Mammary epithelial cell (primary cell): ENCODE measurements at regions of chr17 and their contacts with region 1.

Region 1: GRCh38 chr17:66743511-66743910 is 91.4 kb upstream of the CACNG5 start:
- DNase-seq: no peak
- H3K4me3 ChIP-seq: no peak overlapping the region
- H3K27ac ChIP-seq: no peak overlapping the region
- H3K4me1 ChIP-seq: no peaks in the 10 kb centered on the region
- H3K27me3 ChIP-seq: no peaks in the 10 kb centered on the region
- CTCF ChIP-seq: no peak

Region 2: DNA sequence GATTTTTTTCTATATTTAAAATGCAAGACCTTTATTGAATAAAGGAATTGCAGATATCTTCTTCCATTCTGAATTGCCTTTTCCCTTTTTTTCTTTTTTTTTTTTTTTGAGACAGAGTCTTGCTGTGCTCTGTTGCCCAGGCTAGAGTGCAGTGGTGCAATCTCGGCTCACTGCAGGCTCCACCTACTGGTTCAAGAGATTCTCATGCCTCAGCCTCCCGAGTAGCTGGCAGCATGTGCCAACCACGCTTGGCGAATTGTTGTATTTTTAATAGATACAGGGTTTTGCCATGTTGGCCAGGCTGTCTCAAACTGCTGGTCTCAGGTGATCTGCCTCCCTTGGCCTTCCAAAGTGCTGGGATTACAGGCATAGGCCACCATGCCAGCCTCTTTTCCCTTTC is 703.1 kb before region 1 on chr17:
- CTCF ChIA-PET with region 1: no interaction called
- dilution Hi-C with region 1: no loop called
- in situ Hi-C with region 1: no loop called
- intact Hi-C with region 1: no loop called
- DNase-seq: no peak
- H3K4me3 ChIP-seq: no peak overlapping the region
- H3K27ac ChIP-seq: no peak overlapping the region
- H3K4me1 ChIP-seq: no peaks in the 10 kb centered on the region
- H3K27me3 ChIP-seq: no peaks in the 10 kb centered on the region
- CTCF ChIP-seq: peak in 1 of 2 donors; percentile 5

Region 3: DNA sequence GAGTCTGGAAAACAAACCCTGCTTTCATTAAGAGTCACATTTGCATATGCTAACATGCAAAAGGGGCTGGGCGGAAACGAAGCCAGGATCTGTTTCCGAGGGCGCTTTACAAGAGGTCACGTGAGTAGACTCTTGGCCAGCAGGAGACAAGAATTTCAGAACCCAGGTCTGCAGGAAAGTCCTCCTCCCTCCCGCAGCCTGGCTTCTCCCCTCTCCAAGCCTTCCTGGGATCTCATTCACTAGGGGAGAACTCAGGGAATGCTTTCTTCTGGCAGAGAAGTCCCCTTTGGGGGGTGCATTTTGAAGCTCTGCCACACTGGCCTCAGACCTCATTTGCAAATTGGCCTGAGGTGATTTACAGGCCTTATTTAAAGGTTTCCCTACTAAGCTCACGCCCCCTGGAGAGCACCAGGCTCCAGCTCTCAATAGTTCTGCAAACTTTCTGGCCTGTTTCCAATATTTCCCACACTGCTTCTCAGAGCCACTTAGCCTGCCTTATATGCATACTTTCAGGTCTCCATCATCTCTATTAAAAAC is 34.2 kb after region 1 on chr17:
- CTCF ChIA-PET with region 1: no interaction called
- dilution Hi-C with region 1: loop called (anchors 5 kb)
- in situ Hi-C with region 1: no loop called
- intact Hi-C with region 1: no loop called
- DNase-seq: no peak
- H3K4me3 ChIP-seq: no peak overlapping the region
- H3K27ac ChIP-seq: no peak overlapping the region
- H3K4me1 ChIP-seq: no peaks in the 10 kb centered on the region
- H3K27me3 ChIP-seq: no peaks in the 10 kb centered on the region
- CTCF ChIP-seq: no peak